ENCODE measurements at regions of chr13 and their contacts with region 1.

Region 1: DNA sequence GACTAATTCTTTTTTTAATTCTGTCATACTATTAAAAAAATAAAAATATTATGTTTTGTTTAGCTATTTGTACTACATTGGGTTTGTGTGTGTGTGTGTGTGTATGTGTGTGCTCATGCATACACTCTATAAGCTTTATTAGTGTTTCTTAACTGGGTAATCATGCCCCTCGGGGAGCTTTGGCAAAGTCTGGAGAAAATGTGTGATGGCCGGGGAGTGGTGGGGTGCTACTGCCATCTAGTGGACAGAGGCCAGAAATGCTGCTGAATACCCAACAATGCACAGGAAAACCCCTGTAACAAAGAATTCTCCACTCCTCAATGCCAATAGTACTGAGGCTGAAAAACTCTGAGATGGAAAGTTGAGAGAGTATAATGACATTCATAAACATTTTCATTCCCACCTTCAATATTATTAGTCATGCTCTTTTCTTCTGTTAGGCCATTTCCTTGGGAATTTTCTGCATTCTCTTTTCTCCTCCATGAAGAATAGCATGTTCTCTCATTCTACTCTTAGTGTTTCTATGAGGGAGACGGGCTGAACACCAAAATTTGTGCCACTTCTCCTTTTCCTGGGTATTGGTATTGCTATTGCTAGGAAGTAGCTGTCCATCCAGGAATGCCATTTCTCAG is 157.3 kb downstream of the DNAJC3 start:
- DNase-seq: peak; percentile 45
- ATAC-seq: peak; percentile 66
- H3K4me3 Mint-ChIP-seq: no peak overlapping the region
- H3K27ac Mint-ChIP-seq: no peak overlapping the region
- H3K4me1 Mint-ChIP-seq: no peaks in the 10 kb centered on the region
- H3K27me3 Mint-ChIP-seq: peaks cover 2% of the 10 kb centered on the region
- CTCF ChIP-seq: peak; percentile 94

Region 2: GRCh38 chr13:95191821-95192563 is 642.3 kb before region 1 on chr13:
- CTCF ChIA-PET with region 1: interaction called, 27 read pairs
- POLR2A ChIA-PET with region 1: no interaction called
- intact Hi-C with region 1: loop called (anchors 1 kb)
- DNase-seq: peak; percentile 67
- ATAC-seq: peak; percentile 97
- H3K4me3 Mint-ChIP-seq: no peak overlapping the region
- H3K27ac Mint-ChIP-seq: no peak overlapping the region
- H3K4me1 Mint-ChIP-seq: peaks cover 1% of the 10 kb centered on the region
- H3K27me3 Mint-ChIP-seq: no peaks in the 10 kb centered on the region
- CTCF ChIP-seq: no peak

Region 3: GRCh38 chr13:95494082-95494681 is 340.1 kb before region 1 on chr13:
- CTCF ChIA-PET with region 1: interaction called, 12 read pairs
- POLR2A ChIA-PET with region 1: no interaction called
- intact Hi-C with region 1: loop called (anchors 1 kb)
- DNase-seq: no peak
- ATAC-seq: no peak
- H3K4me3 Mint-ChIP-seq: no peak overlapping the region
- H3K27ac Mint-ChIP-seq: no peak overlapping the region
- H3K4me1 Mint-ChIP-seq: no peaks in the 10 kb centered on the region
- H3K27me3 Mint-ChIP-seq: peaks cover 20% of the 10 kb centered on the region
- CTCF ChIP-seq: peak; percentile 90

Region 4: DNA sequence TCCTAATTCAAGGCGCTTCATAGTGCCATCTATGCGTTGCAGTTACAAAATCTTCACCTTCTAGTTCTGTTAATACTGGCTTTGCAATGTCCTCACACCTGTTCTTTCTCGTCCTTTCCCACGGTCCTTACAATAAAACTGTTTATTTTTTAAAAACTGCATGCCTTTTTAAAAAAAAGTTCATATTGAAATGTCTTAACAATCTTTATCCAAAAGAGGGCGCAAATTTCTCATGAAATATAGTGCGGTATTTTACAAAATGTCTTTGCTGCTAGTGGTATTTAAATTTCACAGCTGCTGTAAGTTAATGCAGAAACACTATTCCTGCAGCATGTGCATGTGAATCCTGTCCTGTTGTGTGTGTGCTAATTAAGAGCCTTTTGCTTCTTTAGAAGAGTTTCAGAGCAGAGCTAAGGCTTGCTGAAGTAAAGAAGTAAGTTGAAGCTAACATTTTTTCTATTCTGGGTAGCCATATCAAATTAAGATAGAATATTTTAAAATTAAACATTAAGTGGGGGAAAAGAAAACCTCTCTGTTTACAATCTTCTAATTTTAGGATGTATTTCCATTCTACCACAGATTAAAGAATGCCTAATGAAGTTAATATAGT is 297.5 kb before region 1 on chr13:
- CTCF ChIA-PET with region 1: interaction called, 40 read pairs
- POLR2A ChIA-PET with region 1: no interaction called
- intact Hi-C with region 1: loop called (anchors 1 kb)
- DNase-seq: no peak
- ATAC-seq: no peak
- H3K4me3 Mint-ChIP-seq: no peak overlapping the region
- H3K27ac Mint-ChIP-seq: no peak overlapping the region
- H3K4me1 Mint-ChIP-seq: no peaks in the 10 kb centered on the region
- H3K27me3 Mint-ChIP-seq: peaks cover 18% of the 10 kb centered on the region
- CTCF ChIP-seq: peak; percentile 33

Region 5: GRCh38 chr13:95624020-95624419 is 210.2 kb before region 1 on chr13:
- CTCF ChIA-PET with region 1: interaction called, 127 read pairs
- POLR2A ChIA-PET with region 1: no interaction called
- intact Hi-C with region 1: loop called (anchors 1 kb)
- DNase-seq: no peak
- ATAC-seq: no peak
- H3K4me3 Mint-ChIP-seq: no peak overlapping the region
- H3K27ac Mint-ChIP-seq: no peak overlapping the region
- H3K4me1 Mint-ChIP-seq: no peaks in the 10 kb centered on the region
- H3K27me3 Mint-ChIP-seq: peaks cover 11% of the 10 kb centered on the region
- CTCF ChIP-seq: no peak

Region 6: GRCh38 chr13:95822303-95822702 is 11.9 kb before region 1 on chr13:
- CTCF ChIA-PET with region 1: interaction called, 16 read pairs
- POLR2A ChIA-PET with region 1: no interaction called
- intact Hi-C with region 1: no loop called
- DNase-seq: no peak
- ATAC-seq: no peak
- H3K4me3 Mint-ChIP-seq: no peak overlapping the region
- H3K27ac Mint-ChIP-seq: no peak overlapping the region
- H3K4me1 Mint-ChIP-seq: no peaks in the 10 kb centered on the region
- H3K27me3 Mint-ChIP-seq: peaks cover 4% of the 10 kb centered on the region
- CTCF ChIP-seq: no peak

Region 7: DNA sequence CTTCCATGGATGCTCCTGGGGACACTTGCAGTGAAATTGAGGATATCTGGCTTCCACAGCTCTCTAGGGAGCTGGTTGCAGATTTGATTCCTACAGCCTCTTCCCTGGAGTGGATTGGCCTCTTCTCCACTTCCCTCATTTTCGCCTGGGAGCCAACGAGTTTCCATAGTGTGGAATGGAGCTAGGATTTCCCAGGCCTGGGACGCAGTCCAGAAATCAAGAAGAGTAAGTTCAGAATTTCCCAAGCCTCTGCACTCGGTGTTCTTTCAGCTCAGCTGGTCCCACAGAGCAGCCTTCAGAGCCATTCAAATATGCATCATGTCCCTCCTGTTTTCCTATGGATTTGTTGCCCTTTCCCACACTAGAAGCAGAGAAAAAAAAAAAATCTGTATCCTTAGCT is 1667.9 kb after region 1 on chr13:
- CTCF ChIA-PET with region 1: no interaction called
- POLR2A ChIA-PET with region 1: no interaction called
- intact Hi-C with region 1: no loop called
- DNase-seq: no peak
- ATAC-seq: no peak
- H3K4me3 Mint-ChIP-seq: no peak overlapping the region
- H3K27ac Mint-ChIP-seq: no peak overlapping the region
- H3K4me1 Mint-ChIP-seq: no peaks in the 10 kb centered on the region
- H3K27me3 Mint-ChIP-seq: peaks cover 9% of the 10 kb centered on the region
- CTCF ChIP-seq: no peak